HepG2 (cell line): ENCODE measurements at regions of chr14 and their contacts with region 1.

Region 1: GRCh38 chr14:93970549-93970946 is 5.8 kb downstream of the ASB2 start:
- DNase-seq: peak; percentile 52
- ATAC-seq: peak; percentile 90
- H3K4me3 ChIP-seq: 0 out of 6 replicates have a peak overlapping the region, but pooled peaks of 2 of the 3 experiments have one; percentile 9 to 57
- H3K27ac ChIP-seq: no peak overlapping the region
- H3K4me1 ChIP-seq: peaks cover 44% of the 10 kb centered on the region
- H3K27me3 ChIP-seq: peaks cover 7 to 40% of the 10 kb centered on the region in 2 experiments
- CTCF ChIP-seq: peak; percentile 88
- EP300 ChIP-seq: no peak
- POLR2A ChIP-seq: no peak
- RAD21 ChIP-seq: peak; percentile 85

Region 2: GRCh38 chr14:93939304-93940229 is 31.0 kb before region 1 on chr14:
- CTCF ChIA-PET with region 1: interaction called, 51 read pairs
- POLR2A ChIA-PET with region 1: interaction called, 8 read pairs
- in situ Hi-C with region 1: loop called (anchors 5 kb)
- intact Hi-C with region 1: loop called (anchors 1 kb)
- DNase-seq: no peak
- ATAC-seq: peak; percentile 91
- H3K4me3 ChIP-seq: no peak overlapping the region
- H3K27ac ChIP-seq: no peak overlapping the region
- H3K4me1 ChIP-seq: peaks cover 25% of the 10 kb centered on the region
- H3K27me3 ChIP-seq: no peaks in the 10 kb centered on the region; a peak in 1 of 5 replicates
- CTCF ChIP-seq: peak; percentile 92
- EP300 ChIP-seq: no peak
- POLR2A ChIP-seq: no peak
- RAD21 ChIP-seq: peak; percentile 97

Region 3: DNA sequence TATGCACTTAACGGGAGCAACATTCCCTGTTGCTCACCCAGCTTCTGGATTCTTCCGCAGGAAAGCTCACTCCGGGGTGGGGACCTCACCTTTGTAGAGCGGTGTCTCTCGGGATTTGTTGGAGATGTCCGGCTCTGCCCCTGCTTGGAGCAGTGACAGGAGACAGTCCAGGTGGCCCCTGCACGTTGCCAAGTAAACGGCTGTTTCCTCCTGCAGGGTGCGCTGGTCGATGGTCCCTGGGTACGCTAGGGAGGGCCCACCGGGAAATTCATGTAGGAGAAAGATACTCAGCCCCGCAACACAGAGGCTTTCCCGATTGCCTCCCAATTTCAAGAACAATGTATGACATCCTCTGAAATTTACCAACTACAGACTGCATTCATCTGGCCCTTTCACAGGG is 17.3 kb before region 1 on chr14:
- CTCF ChIA-PET with region 1: interaction called, 23 read pairs
- POLR2A ChIA-PET with region 1: interaction called, 17 read pairs
- in situ Hi-C with region 1: no loop called
- intact Hi-C with region 1: loop called (anchors 1 kb)
- DNase-seq: peak; percentile 50
- ATAC-seq: peak; percentile 85
- H3K4me3 ChIP-seq: peak overlapping the region; percentile 25 to 66 (median 58); a peak in 5 of 6 replicates
- H3K27ac ChIP-seq: no peak overlapping the region
- H3K4me1 ChIP-seq: peaks cover 61% of the 10 kb centered on the region
- H3K27me3 ChIP-seq: no peaks in the 10 kb centered on the region
- CTCF ChIP-seq: peak; percentile 79
- EP300 ChIP-seq: no peak
- POLR2A ChIP-seq: no peak
- RAD21 ChIP-seq: peak; percentile 72

Region 4: DNA sequence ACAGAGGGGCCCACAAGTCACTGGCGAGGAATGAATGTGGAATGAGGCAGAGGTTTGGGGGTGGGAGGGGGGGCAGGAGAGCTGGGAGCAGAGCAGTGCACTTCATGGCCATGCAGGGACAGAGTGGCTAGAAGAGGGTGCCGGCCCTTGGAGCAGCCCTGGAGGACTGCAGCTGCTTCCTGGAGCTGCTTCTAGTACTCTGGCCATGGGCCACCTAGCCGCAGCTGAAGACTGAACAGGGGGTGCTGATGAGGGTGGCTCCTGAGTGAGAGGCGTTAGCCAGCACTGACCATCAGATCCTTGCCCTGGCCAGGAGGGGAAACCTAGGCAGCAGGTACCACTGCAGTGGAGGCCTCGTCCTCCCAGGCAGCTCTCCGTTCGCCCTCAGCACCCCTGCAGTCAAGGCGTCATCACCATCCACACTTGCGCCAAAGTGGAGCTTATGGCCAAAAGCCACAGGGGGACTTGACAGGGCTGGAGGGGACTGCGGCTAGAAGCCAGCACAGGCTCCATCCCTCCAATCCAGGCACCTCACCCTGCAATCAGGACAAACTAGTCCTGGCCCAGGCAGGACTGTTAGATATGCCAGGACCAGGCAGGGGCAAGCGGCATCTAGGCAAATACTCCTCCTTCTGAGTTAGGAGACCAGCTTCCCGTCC is 72.0 kb after region 1 on chr14:
- CTCF ChIA-PET with region 1: no interaction called
- POLR2A ChIA-PET with region 1: no interaction called
- in situ Hi-C with region 1: no loop called
- intact Hi-C with region 1: no loop called
- DNase-seq: no peak
- ATAC-seq: peak; percentile 12
- H3K4me3 ChIP-seq: peak overlapping the region in 1 of 3 experiments; percentile 1; a peak in 1 of 6 replicates
- H3K27ac ChIP-seq: no peak overlapping the region
- H3K4me1 ChIP-seq: peaks cover 62% of the 10 kb centered on the region
- H3K27me3 ChIP-seq: no peaks in the 10 kb centered on the region
- CTCF ChIP-seq: no peak
- EP300 ChIP-seq: no peak
- POLR2A ChIP-seq: no peak
- RAD21 ChIP-seq: no peak